MCF 10A (cell line): ENCODE measurements at regions of chr7 and their contacts with region 1.

Region 1: DNA sequence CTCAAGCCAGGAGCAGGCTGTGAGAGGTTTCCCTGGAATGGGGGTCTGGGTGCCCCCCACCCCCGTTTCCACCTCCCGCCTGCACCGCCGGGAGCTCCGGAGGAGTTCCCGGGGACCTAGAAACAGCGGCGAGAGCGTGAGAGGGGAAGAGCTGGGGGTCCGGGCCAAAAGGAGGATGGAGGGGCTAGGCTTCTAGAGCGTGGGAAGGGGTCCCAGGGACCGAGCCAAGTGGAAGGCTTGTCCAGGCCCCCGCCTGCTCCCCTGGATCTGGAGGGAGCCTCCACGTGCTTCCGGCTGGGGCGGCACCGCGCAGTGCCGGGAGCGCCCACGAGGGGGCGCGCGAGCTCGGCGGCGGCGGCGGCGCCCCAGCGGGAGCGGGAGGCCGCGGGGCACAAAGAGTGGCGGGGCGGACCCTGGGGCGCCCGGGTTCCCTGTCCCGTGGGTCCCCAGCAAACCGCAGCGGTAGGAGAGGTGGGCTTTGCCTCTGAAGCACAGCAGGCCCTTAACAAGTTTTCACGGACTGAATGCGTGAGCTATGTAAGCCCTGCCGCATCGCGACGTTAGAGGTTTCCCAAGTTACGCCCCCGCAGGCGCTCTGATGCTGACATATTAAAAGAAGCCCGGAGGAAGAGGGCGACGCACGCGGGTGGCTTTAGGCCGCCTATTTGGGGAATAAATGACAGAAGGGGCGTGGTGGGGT is 104.4 kb upstream of the LRRC4 start:
- DNase-seq: peak; percentile 41
- H3K4me3 Mint-ChIP-seq: peak overlapping the region; percentile 59
- H3K27ac Mint-ChIP-seq: no peak overlapping the region
- H3K4me1 Mint-ChIP-seq: no peaks in the 10 kb centered on the region
- H3K27me3 Mint-ChIP-seq: peaks cover 33% of the 10 kb centered on the region
- CTCF ChIP-seq: peak; percentile 73

Region 2: DNA sequence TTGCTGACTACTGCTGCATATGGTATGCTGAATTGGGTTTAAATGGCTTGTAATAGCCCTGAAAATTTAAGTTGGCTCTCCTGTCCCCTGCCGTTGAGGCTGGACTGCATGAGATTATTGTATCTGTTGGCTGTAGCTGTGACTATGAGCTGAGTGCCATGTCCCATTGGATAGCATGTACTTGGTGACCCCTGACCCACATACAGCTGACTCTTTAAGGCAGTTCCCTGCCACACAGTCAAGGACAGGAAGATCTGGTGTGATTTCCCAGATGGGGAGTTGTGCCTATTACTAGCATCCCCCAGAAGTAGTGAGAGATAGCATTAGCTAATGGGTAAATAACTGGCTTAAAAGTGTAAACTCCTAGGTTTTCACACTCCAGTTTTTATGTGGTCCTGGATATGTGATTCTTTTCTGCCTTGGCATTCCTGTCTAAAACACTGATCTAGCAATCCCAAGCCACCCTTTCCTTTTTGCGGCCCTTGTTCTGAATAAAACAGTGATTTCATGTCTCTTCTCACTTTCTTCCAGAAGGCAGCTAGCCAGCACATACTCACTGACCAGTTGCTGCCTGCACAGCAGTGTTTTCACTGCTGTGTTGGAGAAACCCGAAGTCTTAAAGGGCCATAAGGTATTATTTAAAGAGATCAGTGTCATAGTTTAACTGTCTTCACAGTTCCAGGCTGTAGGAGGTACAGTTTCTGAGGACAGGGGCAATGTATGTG is 140.3 kb before region 1 on chr7:
- CTCF ChIA-PET with region 1: no interaction called
- POLR2A ChIA-PET with region 1: no interaction called
- intact Hi-C with region 1: no loop called
- DNase-seq: no peak
- H3K4me3 Mint-ChIP-seq: no peak overlapping the region
- H3K27ac Mint-ChIP-seq: peak overlapping the region; percentile 36
- H3K4me1 Mint-ChIP-seq: no peaks in the 10 kb centered on the region
- H3K27me3 Mint-ChIP-seq: no peaks in the 10 kb centered on the region
- CTCF ChIP-seq: no peak

Region 3: GRCh38 chr7:128122576-128123290 is 12.9 kb before region 1 on chr7:
- CTCF ChIA-PET with region 1: interaction called, 10 read pairs
- POLR2A ChIA-PET with region 1: no interaction called
- intact Hi-C with region 1: no loop called
- DNase-seq: peak; percentile 72
- H3K4me3 Mint-ChIP-seq: no peak overlapping the region
- H3K27ac Mint-ChIP-seq: no peak overlapping the region
- H3K4me1 Mint-ChIP-seq: peaks cover 8% of the 10 kb centered on the region
- H3K27me3 Mint-ChIP-seq: no peaks in the 10 kb centered on the region
- CTCF ChIP-seq: no peak

Region 4: GRCh38 chr7:128164061-128164954 is 28.6 kb after region 1 on chr7:
- CTCF ChIA-PET with region 1: interaction called, 31 read pairs
- POLR2A ChIA-PET with region 1: interaction called, 3 read pairs
- intact Hi-C with region 1: no loop called
- DNase-seq: peak; percentile 91
- H3K4me3 Mint-ChIP-seq: no peak overlapping the region
- H3K27ac Mint-ChIP-seq: peak overlapping the region; percentile 46
- H3K4me1 Mint-ChIP-seq: peaks cover 18% of the 10 kb centered on the region
- H3K27me3 Mint-ChIP-seq: peaks cover 12% of the 10 kb centered on the region
- CTCF ChIP-seq: no peak

Region 5: DNA sequence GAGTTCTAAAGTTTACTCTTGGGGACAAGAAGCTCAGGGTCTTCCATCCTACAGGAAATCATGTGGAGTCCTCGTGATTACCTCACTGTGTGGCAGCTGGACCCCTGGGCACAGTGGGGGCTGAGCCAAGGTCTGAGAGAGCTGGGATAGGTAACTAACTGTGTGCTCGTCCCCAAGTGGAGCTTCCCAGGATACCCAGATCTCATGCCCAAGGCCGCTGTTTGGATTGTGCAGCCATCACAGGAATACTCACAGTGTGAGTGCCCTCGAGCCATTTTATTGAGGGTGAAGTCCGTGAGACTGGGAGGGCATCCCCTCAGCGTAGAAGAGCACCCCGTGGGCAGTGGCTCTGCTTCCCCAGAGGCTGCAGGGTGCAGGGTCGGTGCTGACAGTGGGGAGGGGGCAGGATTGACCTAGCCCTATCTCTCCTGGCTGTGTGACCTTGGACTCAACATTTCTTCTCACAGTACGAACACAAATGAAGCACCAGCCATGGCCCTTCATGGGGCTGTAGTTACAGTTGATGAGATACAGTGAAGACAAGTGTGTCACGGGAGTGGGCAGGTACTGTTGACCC is 35.8 kb after region 1 on chr7:
- CTCF ChIA-PET with region 1: interaction called, 12 read pairs
- POLR2A ChIA-PET with region 1: no interaction called
- intact Hi-C with region 1: no loop called
- DNase-seq: no peak
- H3K4me3 Mint-ChIP-seq: no peak overlapping the region
- H3K27ac Mint-ChIP-seq: no peak overlapping the region
- H3K4me1 Mint-ChIP-seq: no peaks in the 10 kb centered on the region
- H3K27me3 Mint-ChIP-seq: peaks cover 36% of the 10 kb centered on the region
- CTCF ChIP-seq: no peak

Region 6: DNA sequence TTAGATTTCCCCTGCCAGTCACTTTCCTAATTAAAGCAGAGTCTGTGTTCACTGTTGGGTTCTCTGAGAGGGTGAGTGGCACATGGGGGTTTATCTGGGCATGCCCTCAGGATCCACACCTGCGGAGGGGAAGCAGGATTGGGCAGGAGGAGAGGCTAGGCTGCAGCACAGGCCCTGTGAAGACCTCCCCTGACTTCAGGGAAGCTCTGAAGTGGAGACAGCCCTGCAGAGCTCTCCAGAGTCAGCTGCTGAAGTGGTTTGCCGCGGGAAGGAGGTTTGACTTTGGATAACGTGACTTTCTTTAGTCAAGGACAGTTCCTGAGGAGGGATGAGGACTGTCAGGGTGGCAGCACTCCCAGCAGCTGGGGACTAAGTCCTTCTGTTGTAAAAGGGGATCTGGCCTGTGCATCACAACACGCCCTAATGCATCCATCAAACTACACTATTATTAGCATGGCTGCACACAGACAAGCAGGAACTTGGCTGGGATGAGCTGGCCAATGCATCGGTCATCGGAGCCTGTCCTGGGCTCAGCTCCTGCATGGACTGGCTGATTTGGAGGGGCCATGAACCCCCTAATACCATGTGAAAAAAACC is 54.5 kb after region 1 on chr7:
- CTCF ChIA-PET with region 1: interaction called, 15 read pairs
- POLR2A ChIA-PET with region 1: interaction called, 3 read pairs
- intact Hi-C with region 1: no loop called
- DNase-seq: no peak
- H3K4me3 Mint-ChIP-seq: no peak overlapping the region
- H3K27ac Mint-ChIP-seq: no peak overlapping the region
- H3K4me1 Mint-ChIP-seq: no peaks in the 10 kb centered on the region
- H3K27me3 Mint-ChIP-seq: peaks cover 59% of the 10 kb centered on the region
- CTCF ChIP-seq: no peak

Region 7: GRCh38 chr7:128201051-128201689 is 65.5 kb after region 1 on chr7:
- CTCF ChIA-PET with region 1: interaction called, 188 read pairs
- POLR2A ChIA-PET with region 1: no interaction called
- intact Hi-C with region 1: no loop called
- DNase-seq: no peak
- H3K4me3 Mint-ChIP-seq: no peak overlapping the region
- H3K27ac Mint-ChIP-seq: no peak overlapping the region
- H3K4me1 Mint-ChIP-seq: no peaks in the 10 kb centered on the region
- H3K27me3 Mint-ChIP-seq: peaks cover 25% of the 10 kb centered on the region
- CTCF ChIP-seq: no peak

Region 8: DNA sequence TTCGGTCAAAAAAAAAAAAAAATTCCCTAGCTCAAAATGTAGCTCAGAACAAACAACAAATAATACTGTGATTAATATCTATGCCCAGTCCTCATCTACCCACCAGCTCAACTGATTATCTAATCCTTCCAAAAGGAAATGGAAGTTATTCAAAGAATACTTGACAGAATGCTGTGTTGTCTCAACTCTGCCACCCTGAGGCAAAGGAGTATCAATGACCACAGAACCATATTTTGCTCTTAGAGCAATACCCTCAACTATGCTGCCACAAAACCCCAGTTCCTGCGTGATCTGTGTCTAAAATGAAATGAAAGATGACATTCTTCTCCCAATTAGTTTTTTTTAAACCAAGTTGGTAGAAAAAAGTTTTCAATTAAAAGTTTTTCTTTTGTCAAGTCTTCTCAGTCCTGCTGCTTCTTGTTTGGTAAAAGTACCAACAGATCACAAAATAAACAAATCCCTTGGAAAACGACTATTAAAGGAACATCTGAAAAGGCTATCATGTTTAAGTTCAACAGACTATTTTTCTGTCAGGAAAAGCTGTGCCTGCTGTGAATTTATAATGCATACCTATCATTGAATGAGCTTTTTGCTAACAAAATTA is 186.5 kb after region 1 on chr7:
- CTCF ChIA-PET with region 1: interaction called, 3 read pairs
- POLR2A ChIA-PET with region 1: no interaction called
- intact Hi-C with region 1: loop called (anchors 5 kb)
- DNase-seq: peak; percentile 56
- H3K4me3 Mint-ChIP-seq: no peak overlapping the region
- H3K27ac Mint-ChIP-seq: no peak overlapping the region
- H3K4me1 Mint-ChIP-seq: no peaks in the 10 kb centered on the region
- H3K27me3 Mint-ChIP-seq: no peaks in the 10 kb centered on the region
- CTCF ChIP-seq: peak; percentile 49

Region 9: DNA sequence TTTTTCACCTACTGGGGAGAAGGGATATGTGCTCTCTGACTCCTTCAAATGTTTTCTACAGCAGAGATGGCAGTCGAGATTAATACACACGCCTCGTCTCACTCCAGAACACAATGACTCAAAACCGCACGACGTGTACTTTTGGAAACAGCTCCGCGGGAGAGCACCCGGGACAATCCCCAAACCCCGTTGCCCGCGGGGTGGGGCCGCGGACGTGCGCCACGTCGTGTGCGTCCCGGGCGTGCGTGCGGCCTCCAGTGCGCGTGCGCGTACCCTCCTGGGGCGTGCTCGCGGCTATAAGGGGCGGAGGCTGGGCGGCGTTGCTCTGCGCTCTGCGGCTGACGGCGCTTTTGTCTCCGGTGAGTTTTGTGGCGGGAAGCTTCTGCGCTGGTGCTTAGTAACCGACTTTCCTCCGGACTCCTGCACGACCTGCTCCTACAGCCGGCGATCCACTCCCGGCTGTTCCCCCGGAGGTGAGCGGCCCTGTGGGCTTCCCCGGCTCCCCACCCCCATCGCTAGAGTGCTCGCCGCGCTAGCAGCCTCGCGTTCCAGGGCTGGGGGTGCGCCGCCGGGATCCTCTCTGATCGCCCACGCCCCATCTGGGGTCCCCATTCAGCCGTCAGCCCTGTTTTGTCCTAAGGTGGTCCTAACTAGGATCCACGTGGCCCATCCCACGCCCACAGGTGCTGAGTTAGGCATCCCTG is 320.0 kb after region 1 on chr7 and contains the start of gene HILPDA:
- CTCF ChIA-PET with region 1: no interaction called
- POLR2A ChIA-PET with region 1: no interaction called
- intact Hi-C with region 1: no loop called
- DNase-seq: peak; percentile 94
- H3K4me3 Mint-ChIP-seq: peak within 1 kb of the TSS; percentile 95
- H3K27ac Mint-ChIP-seq: peak within 1 kb of the TSS; percentile 88
- H3K4me1 Mint-ChIP-seq: peaks cover 14% of the 10 kb centered on the region
- H3K27me3 Mint-ChIP-seq: peaks cover 25% of the 10 kb centered on the region
- CTCF ChIP-seq: no peak
- total RNA-seq, gene HILPDA: 6.2 and 8.3 TPM in 2 replicates